GM18951 (cell line): ENCODE measurements at regions of chr10 and their contacts with region 1.

Region 1: GRCh38 chr10:106795619-106796018 is 368.9 kb downstream of the SORCS1 start:
- POLR2A ChIP-seq: no peak

Region 2: DNA sequence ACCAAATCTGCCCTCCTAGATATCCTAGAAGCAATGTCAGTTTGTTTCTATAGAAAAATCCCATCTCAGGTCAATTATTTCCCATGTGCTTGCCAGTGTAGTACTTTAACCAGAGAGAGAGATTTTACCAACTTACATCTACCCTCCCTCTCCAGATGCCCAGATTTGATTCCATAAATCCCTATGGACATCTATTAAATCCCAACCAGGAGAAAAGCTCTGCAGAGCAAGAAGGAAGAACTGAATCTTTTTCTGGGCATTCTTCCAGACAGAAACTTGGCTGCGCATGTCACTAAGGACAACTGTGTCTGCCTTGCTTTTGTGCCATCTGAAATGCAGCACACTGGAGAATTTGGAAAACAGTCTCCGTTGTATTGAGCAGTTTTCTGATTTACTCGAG is 228.7 kb before region 1 on chr10:
- in situ Hi-C with region 1: no loop called
- POLR2A ChIP-seq: no peak

Region 3: GRCh38 chr10:106741031-106741530 is 54.5 kb before region 1 on chr10:
- in situ Hi-C with region 1: no loop called
- POLR2A ChIP-seq: no peak

Region 4: GRCh38 chr10:106980495-106981451 is 185.2 kb after region 1 on chr10:
- in situ Hi-C with region 1: loop called (anchors 10 kb)
- POLR2A ChIP-seq: no peak